A673 (cell line): ENCODE measurements at regions of chr1 and their contacts with region 1.

Region 1: GRCh38 chr1:70809069-70809468 is 238.5 kb downstream of the PTGER3 start:
- DNase-seq: no peak
- H3K4me3 ChIP-seq: no peak overlapping the region
- H3K27ac ChIP-seq: no peak overlapping the region
- H3K4me1 ChIP-seq: peaks cover 44% of the 10 kb centered on the region
- H3K27me3 ChIP-seq: no peaks in the 10 kb centered on the region
- CTCF ChIP-seq: no peak

Region 2: GRCh38 chr1:70331962-70332361 is 477.1 kb before region 1 on chr1:
- CTCF ChIA-PET with region 1: no interaction called
- POLR2A ChIA-PET with region 1: no interaction called
- intact Hi-C with region 1: no loop called
- DNase-seq: no peak
- H3K4me3 ChIP-seq: no peak overlapping the region
- H3K27ac ChIP-seq: no peak overlapping the region
- H3K4me1 ChIP-seq: no peaks in the 10 kb centered on the region
- H3K27me3 ChIP-seq: no peaks in the 10 kb centered on the region
- CTCF ChIP-seq: no peak

Region 3: GRCh38 chr1:70745199-70745598 is 63.9 kb before region 1 on chr1:
- CTCF ChIA-PET with region 1: no interaction called
- POLR2A ChIA-PET with region 1: no interaction called
- intact Hi-C with region 1: loop called (anchors 5 kb)
- DNase-seq: peak; percentile 70
- H3K4me3 ChIP-seq: no peak overlapping the region
- H3K27ac ChIP-seq: no peak overlapping the region
- H3K4me1 ChIP-seq: no peaks in the 10 kb centered on the region
- H3K27me3 ChIP-seq: no peaks in the 10 kb centered on the region
- CTCF ChIP-seq: peak; percentile 58

Region 4: GRCh38 chr1:70819785-70820184 is 10.7 kb after region 1 on chr1:
- CTCF ChIA-PET with region 1: no interaction called
- POLR2A ChIA-PET with region 1: no interaction called
- intact Hi-C with region 1: no loop called
- DNase-seq: peak; percentile 84
- H3K4me3 ChIP-seq: no peak overlapping the region
- H3K27ac ChIP-seq: no peak overlapping the region
- H3K4me1 ChIP-seq: peaks cover 34% of the 10 kb centered on the region
- H3K27me3 ChIP-seq: no peaks in the 10 kb centered on the region
- CTCF ChIP-seq: no peak